Endothelial cell of umbilical vein (primary cell): ENCODE measurements at regions of chr6 and their contacts with region 1.

Region 1: DNA sequence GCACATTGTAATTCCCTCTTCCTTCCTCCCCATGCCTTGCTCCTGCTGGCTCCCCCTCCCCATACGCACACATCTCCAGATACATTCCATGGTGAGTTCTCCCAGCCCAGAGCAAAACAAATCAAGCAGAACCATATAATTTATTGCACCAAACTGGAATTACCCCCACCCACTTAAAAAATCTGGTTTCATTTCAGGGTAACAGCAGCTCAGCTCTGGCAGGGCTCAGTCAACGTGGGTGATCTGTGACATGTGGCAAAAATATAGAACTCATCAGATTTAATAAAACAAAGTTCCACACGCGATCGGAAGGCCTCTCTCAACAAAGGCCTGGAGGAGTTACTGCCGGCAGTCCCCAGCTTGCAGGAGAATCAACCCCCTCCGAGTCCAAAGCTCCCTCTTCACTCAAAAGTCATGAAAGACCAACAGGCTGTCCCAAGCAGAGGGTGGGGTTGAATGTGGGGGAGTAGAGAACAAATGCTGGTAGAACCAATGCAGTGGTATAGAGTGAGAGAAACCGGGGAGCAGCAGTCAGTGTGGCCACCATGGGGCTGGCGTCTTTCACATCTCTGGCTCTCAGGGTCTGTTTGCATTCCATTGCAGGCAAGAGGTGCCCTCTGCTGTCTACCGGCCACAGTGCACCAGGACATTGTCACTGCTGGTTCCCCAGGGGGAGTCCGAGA is 323.3 kb upstream of the NT5E start:
- DNase-seq: peak; percentile 75
- H3K4me3 ChIP-seq: no peak overlapping the region
- H3K27ac ChIP-seq: no peak overlapping the region
- H3K4me1 ChIP-seq: no peaks in the 10 kb centered on the region
- H3K27me3 ChIP-seq: peaks cover 14 to 17% of the 10 kb centered on the region in 2 experiments
- CTCF ChIP-seq: peak; percentile 72 to 89
- POLR2A ChIP-seq: no peak

Region 2: DNA sequence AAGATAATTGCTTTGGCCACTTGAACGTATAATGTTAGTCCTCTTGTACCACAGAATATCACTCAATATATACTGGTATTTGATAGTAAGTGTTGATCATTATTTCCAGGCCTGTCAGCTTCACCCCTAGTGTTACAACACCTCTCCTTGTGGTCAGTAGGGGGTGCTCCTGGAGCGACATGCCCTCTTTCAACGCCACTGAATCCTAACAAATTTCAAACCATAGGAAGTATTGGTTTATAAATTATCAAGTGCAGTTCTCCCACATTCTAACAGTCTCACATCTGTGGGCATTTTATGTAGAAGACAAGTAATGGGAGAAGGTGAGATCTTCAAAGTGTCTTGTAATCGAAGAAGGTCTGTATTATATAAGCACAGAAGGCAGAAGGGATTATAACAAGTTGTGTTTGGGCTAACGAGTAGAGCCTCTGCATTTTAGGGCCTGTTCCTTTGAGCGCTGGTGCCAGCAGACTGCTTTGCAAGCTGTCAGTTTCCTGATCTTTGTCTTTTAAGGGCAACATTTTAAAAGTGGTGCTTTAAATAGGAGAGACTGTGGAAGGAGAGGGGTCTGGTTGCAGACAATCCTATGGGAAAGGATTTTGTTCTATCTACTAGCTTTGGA is 842.1 kb before region 1 on chr6:
- CTCF ChIA-PET with region 1: interaction called, 17 read pairs
- POLR2A ChIA-PET with region 1: no interaction called
- dilution Hi-C with region 1: no loop called
- intact Hi-C with region 1: loop called (anchors 2 kb)
- DNase-seq: peak; percentile 41
- H3K4me3 ChIP-seq: no peak overlapping the region
- H3K27ac ChIP-seq: no peak overlapping the region
- H3K4me1 ChIP-seq: no peaks in the 10 kb centered on the region
- H3K27me3 ChIP-seq: peaks cover 6 to 13% of the 10 kb centered on the region in 2 experiments
- CTCF ChIP-seq: peak; percentile 37 to 53
- POLR2A ChIP-seq: no peak

Region 3: DNA sequence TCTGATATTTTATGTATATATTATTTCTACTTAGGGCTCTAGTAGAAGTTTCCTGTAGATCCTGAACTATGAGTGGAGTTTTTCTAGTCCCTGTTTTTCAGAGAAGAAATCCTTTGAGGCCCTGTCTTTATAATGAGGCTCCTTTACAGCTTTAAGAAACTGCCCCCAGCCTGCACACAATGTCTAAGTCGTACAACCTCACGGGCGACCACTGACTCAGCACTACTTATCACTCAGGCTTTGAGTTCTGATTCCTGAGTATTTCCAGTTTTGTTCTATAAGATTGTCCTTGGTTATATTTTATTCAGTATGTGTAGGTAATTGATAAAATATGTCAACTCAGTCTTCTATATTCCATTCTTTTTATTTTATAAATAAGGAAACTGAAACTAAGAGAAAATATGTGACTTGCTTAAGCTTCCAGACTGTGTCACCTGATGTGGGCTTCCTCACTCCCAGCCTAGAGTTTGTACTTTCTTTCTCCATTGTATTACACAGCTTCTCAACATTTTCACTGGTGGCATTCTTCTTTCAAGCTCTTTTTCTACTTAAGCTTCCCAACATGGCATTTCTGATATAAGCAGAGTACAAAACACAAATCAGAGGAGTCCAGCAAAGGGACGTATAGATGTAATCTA is 529.3 kb before region 1 on chr6:
- CTCF ChIA-PET with region 1: no interaction called
- POLR2A ChIA-PET with region 1: no interaction called
- dilution Hi-C with region 1: no loop called
- intact Hi-C with region 1: no loop called
- DNase-seq: peak; percentile 32
- H3K4me3 ChIP-seq: no peak overlapping the region
- H3K27ac ChIP-seq: no peak overlapping the region
- H3K4me1 ChIP-seq: peaks cover 10% of the 10 kb centered on the region
- H3K27me3 ChIP-seq: no peaks in the 10 kb centered on the region
- CTCF ChIP-seq: no peak
- POLR2A ChIP-seq: no peak

Region 4: DNA sequence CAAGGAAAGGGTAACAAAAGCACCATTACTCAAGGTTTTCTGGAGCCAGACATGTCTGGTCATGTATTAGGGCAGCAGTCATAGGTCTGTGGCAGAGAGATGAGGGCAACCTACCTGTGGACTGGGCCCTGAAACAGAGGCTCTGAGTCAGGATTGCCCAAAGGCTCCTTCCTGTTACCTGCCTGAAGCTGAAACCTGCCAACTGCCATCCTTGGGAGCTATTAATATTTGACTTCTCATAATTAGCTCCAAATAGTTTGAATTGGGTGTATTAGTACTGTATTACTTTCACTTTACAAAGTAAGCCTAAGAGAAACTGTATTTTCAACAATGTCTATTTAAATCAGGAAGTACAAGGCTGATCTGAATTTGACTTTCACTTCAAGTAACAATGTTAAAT is 290.3 kb before region 1 on chr6:
- CTCF ChIA-PET with region 1: no interaction called
- POLR2A ChIA-PET with region 1: no interaction called
- dilution Hi-C with region 1: no loop called
- intact Hi-C with region 1: no loop called
- DNase-seq: no peak
- H3K4me3 ChIP-seq: no peak overlapping the region
- H3K27ac ChIP-seq: no peak overlapping the region
- H3K4me1 ChIP-seq: no peaks in the 10 kb centered on the region
- H3K27me3 ChIP-seq: peaks cover 2 to 7% of the 10 kb centered on the region in 2 experiments
- CTCF ChIP-seq: no peak
- POLR2A ChIP-seq: no peak

Region 5: GRCh38 chr6:85864453-85865401 is 738.1 kb after region 1 on chr6:
- CTCF ChIA-PET with region 1: no interaction called
- POLR2A ChIA-PET with region 1: no interaction called
- dilution Hi-C with region 1: no loop called
- intact Hi-C with region 1: no loop called
- DNase-seq: peak; percentile 42
- H3K4me3 ChIP-seq: peak overlapping the region in 1 of 3 experiments; percentile 73
- H3K27ac ChIP-seq: peak overlapping the region; percentile 83
- H3K4me1 ChIP-seq: peaks cover 23% of the 10 kb centered on the region
- H3K27me3 ChIP-seq: no peaks in the 10 kb centered on the region
- CTCF ChIP-seq: no peak
- POLR2A ChIP-seq: no peak